ENCODE measurements at regions of chr11 and their contacts with region 1.

Region 1: GRCh38 chr11:72483412-72484186 is 49.3 kb upstream of the CLPB start:
- DNase-seq: no peak
- H3K4me3 ChIP-seq: no peak overlapping the region
- H3K27ac ChIP-seq: peak overlapping the region; percentile 8 to 34 (median 25)
- H3K4me1 ChIP-seq: peaks cover 0 to 3% (median 1%) of the 10 kb centered on the region in 4 donors
- H3K27me3 ChIP-seq: peaks cover 9% of the 10 kb centered on the region
- CTCF ChIP-seq: no peak
- EP300 ChIP-seq: no peak
- POLR2A ChIP-seq: no peak

Region 2: DNA sequence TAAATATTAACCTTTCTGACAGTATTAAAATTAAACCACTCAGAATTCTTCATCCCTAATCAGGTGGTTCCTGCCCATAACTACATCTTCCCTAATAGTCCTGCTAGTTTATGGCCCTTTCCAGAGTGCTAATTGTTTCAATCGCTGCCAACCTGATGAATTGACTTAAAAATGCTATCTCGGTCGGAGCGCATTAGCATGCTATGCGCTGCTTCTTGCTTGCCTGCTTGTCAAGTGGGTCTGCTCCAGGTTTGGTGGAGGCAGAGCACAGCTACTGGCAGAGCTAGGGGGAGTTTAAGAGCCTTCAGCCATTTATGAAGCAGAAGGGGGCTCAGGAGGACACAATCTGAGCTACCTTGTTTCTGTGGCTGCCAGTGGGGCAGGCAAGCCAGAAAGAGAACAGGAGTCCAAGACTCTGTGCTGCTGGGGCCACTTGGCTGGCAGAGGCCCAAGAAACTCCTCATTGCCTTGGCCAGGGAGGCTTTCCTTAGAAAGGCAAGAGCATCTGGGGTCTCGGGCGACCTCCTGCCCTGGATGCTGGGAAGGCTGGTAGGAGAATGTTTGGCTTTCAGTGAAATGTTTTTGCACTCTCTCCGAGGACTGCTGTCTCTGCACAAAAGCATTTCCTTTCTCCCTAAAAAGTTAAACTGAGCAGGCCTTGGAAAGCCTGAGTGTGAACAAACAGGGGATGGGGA is 177.6 kb before region 1 on chr11:
- in situ Hi-C with region 1: no loop called
- intact Hi-C with region 1: no loop called
- DNase-seq: no peak
- H3K4me3 ChIP-seq: no peak overlapping the region
- H3K27ac ChIP-seq: no peak overlapping the region
- H3K4me1 ChIP-seq: no peaks in the 10 kb centered on the region
- H3K27me3 ChIP-seq: no peaks in the 10 kb centered on the region
- CTCF ChIP-seq: no peak
- EP300 ChIP-seq: no peak
- POLR2A ChIP-seq: no peak

Region 3: DNA sequence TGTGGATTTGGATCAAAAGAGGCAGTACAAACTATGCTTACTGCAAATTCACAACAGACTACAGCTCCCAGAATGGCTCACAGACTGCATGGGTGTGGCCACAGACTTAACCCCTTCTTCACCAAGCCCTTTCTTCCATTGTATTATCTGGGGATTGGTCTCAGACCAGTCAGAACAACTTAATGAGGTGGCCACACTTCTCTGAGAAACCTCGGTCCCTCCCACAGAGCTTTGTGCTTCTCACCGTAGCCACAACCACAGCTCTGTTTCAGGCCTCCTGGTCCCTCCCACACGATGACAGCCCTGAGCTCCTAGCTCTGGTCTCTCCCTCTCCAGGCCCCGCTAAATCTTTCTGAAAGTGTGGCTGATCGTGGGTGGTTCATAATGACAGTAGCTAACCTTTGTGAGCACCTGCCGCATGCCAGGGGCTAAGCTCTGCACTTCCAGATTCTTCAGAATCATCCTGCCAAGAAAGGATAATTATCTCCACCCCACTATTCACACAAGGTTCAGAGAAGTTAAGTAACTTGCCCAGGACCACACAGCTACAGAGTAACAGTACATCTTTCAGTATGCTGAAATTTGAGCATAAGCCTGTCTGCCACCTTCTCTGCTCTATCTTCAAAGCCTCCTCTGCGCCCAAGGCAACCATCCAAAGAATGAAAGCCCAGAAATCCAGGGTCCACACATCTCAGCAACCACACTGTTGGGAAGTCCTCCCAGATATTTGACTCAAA is 185.2 kb after region 1 on chr11:
- in situ Hi-C with region 1: loop called in 1 of 4 experiments (anchors 25 kb)
- intact Hi-C with region 1: no loop called
- DNase-seq: no peak
- H3K4me3 ChIP-seq: no peak overlapping the region
- H3K27ac ChIP-seq: no peak overlapping the region
- H3K4me1 ChIP-seq: no peaks in the 10 kb centered on the region
- H3K27me3 ChIP-seq: peaks cover 60% of the 10 kb centered on the region
- CTCF ChIP-seq: no peak
- EP300 ChIP-seq: no peak
- POLR2A ChIP-seq: no peak

Region 4: GRCh38 chr11:72683782-72684200 is 200.2 kb after region 1 on chr11:
- in situ Hi-C with region 1: no loop called
- intact Hi-C with region 1: loop called (anchors 5 kb)
- DNase-seq: peak; percentile 60
- H3K4me3 ChIP-seq: no peak overlapping the region
- H3K27ac ChIP-seq: peak overlapping the region in 1 of 4 donors; percentile 8
- H3K4me1 ChIP-seq: peaks cover 0 to 5% (median 0%) of the 10 kb centered on the region in 4 donors
- H3K27me3 ChIP-seq: peaks cover 19% of the 10 kb centered on the region
- CTCF ChIP-seq: peak; percentile 90 to 96 (median 92)
- EP300 ChIP-seq: no peak
- POLR2A ChIP-seq: no peak